ENCODE measurements at regions of chr3 and their contacts with region 1.

Region 1: GRCh38 chr3:194103983-194104751 is 31.8 kb upstream of the HES1 start:
- DNase-seq: peak; percentile 94
- ATAC-seq: peak; percentile 88
- H3K4me3 ChIP-seq: peak overlapping the region; percentile 10 to 63 (median 42)
- H3K4me3 Mint-ChIP-seq: peak overlapping the region; percentile 81
- H3K27ac ChIP-seq: peak overlapping the region; percentile 93 to 97
- H3K27ac Mint-ChIP-seq: peak overlapping the region; percentile 81
- H3K4me1 ChIP-seq: peaks cover 85 to 93% of the 10 kb centered on the region in 2 donors
- H3K4me1 Mint-ChIP-seq: peaks cover 88% of the 10 kb centered on the region
- H3K27me3 ChIP-seq: no peaks in the 10 kb centered on the region
- H3K27me3 Mint-ChIP-seq: no peaks in the 10 kb centered on the region
- CTCF ChIP-seq: no peak

Region 2: DNA sequence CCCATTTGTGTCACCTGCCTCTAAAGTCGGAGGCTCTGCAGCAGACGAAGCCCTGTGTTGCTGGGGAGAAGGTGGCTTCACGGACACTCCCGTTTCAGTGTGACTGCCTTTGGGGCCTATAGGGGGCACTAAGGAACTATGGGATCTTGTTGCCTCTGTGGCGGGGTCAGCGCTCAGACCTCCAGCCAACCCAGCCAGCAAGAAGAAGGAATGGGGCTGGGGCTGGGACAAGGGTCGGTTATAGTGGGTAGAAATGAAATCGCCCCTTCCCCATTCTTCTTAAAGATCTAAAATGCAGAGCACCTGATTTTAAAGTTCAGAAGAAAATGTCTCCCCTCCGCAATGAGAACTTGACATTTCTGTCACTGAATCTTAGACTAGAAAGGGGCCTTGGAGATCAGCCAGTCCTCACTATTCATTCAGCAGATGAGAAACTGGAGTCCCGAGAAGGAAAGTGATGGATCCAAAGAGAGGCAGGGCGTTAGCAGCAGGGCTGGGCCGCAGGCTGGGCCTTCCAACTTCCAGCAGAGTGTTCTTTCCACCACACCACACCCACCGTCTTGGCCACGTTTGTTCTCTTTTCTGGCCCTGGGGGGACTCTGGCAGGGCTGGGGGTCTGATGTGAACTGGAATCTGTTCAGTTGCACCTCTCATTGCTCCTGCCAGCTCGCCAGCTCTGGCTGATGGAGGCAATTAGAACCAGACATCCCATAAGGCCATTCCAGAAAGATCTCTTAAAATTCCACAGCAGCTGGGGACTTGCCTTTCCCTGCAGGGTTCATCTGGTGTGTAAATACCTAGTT is 315.8 kb before region 1 on chr3:
- CTCF ChIA-PET with region 1: interaction called, 4 read pairs
- POLR2A ChIA-PET with region 1: no interaction called
- intact Hi-C with region 1: loop called (anchors 1 kb)
- DNase-seq: peak; percentile 79
- ATAC-seq: peak; percentile 88
- H3K4me3 ChIP-seq: no peak overlapping the region
- H3K4me3 Mint-ChIP-seq: no peak overlapping the region
- H3K27ac ChIP-seq: no peak overlapping the region
- H3K27ac Mint-ChIP-seq: peak overlapping the region; percentile 57
- H3K4me1 ChIP-seq: peaks cover 12 to 17% of the 10 kb centered on the region in 2 donors
- H3K4me1 Mint-ChIP-seq: peaks cover 14% of the 10 kb centered on the region
- H3K27me3 ChIP-seq: peaks cover 0 to 44% (median 5%) of the 10 kb centered on the region in 4 experiments
- H3K27me3 Mint-ChIP-seq: peaks cover 54% of the 10 kb centered on the region
- CTCF ChIP-seq: peak; percentile 82

Region 3: GRCh38 chr3:194003125-194004057 is 100.8 kb before region 1 on chr3:
- CTCF ChIA-PET with region 1: interaction called, 3 read pairs
- POLR2A ChIA-PET with region 1: interaction called, 3 read pairs
- intact Hi-C with region 1: loop called (anchors 1 kb)
- DNase-seq: peak; percentile 69
- ATAC-seq: peak; percentile 93
- H3K4me3 ChIP-seq: peak overlapping the region in 4 of 5 experiments; percentile 31 to 76 (median 56)
- H3K4me3 Mint-ChIP-seq: peak overlapping the region; percentile 85
- H3K27ac ChIP-seq: peak overlapping the region in 1 of 2 donors; percentile 22
- H3K27ac Mint-ChIP-seq: peak overlapping the region; percentile 61
- H3K4me1 ChIP-seq: peaks cover 32 to 38% of the 10 kb centered on the region in 2 donors
- H3K4me1 Mint-ChIP-seq: peaks cover 33% of the 10 kb centered on the region
- H3K27me3 ChIP-seq: peaks cover 0 to 18% (median 0%) of the 10 kb centered on the region in 4 experiments
- H3K27me3 Mint-ChIP-seq: peaks cover 13% of the 10 kb centered on the region
- CTCF ChIP-seq: no peak

Region 4: DNA sequence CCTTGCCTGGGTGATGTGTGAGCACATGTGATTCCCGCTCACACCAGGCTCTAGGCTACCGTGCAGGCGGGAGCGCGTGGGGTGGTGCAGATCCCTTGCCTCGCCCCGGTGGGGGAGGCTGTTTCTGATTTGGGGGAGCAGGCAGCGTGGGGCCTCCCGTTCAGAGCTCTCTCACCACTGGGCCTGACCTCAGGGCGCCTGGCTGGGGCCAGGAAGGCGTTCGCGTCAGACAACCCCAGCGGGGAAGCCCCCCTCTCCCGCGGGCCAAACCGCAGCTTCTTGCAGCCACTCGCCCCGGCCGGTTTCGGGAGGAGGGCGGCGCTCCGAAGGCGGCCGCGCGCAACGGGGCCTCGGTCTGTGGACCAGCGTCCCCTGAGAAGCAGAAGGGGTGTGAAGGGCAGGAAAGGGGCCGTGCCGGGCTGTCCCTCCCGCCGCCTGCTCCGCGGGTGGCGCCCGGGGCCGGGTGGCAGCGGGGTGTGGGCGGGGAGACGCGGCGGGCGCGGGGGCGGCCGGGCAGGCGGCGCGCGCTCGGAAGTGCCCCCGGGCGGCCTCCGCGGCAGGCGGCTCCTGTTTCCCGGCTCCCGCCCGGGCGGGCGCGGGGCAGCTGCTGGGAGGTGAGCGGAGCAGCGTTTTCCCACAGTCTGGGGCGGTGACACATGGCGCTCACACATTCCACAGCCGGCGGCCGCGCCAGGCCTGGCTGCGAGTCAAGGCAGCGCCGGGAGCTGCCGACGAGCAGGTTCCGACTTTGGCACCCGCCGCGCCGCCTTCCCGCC is 33.3 kb before region 1 on chr3:
- CTCF ChIA-PET with region 1: interaction called, 8 read pairs
- POLR2A ChIA-PET with region 1: interaction called, 17 read pairs
- intact Hi-C with region 1: loop called (anchors 1 kb)
- DNase-seq: peak; percentile 96
- ATAC-seq: peak; percentile 94
- H3K4me3 ChIP-seq: peak overlapping the region; percentile 30 to 64 (median 52)
- H3K4me3 Mint-ChIP-seq: peak overlapping the region; percentile 85
- H3K27ac ChIP-seq: peak overlapping the region in 1 of 2 donors; percentile 59
- H3K27ac Mint-ChIP-seq: peak overlapping the region; percentile 87
- H3K4me1 ChIP-seq: peaks cover 15 to 22% of the 10 kb centered on the region in 2 donors
- H3K4me1 Mint-ChIP-seq: peaks cover 34% of the 10 kb centered on the region
- H3K27me3 ChIP-seq: no peaks in the 10 kb centered on the region
- H3K27me3 Mint-ChIP-seq: no peaks in the 10 kb centered on the region
- CTCF ChIP-seq: no peak

Region 5: GRCh38 chr3:194306109-194306686 is 202.0 kb after region 1 on chr3:
- CTCF ChIA-PET with region 1: interaction called, 4 read pairs
- POLR2A ChIA-PET with region 1: interaction called, 3 read pairs
- intact Hi-C with region 1: loop called (anchors 1 kb)
- DNase-seq: peak; percentile 89
- ATAC-seq: peak; percentile 63
- H3K4me3 ChIP-seq: peak overlapping the region in 3 of 5 experiments; percentile 7 to 57 (median 27)
- H3K4me3 Mint-ChIP-seq: peak overlapping the region; percentile 71
- H3K27ac ChIP-seq: peak overlapping the region; percentile 95 to 98
- H3K27ac Mint-ChIP-seq: peak overlapping the region; percentile 91
- H3K4me1 ChIP-seq: peaks cover 50 to 61% of the 10 kb centered on the region in 2 donors
- H3K4me1 Mint-ChIP-seq: peaks cover 51% of the 10 kb centered on the region
- H3K27me3 ChIP-seq: peaks cover 0 to 5% (median 2%) of the 10 kb centered on the region in 4 experiments
- H3K27me3 Mint-ChIP-seq: peaks cover 5% of the 10 kb centered on the region
- CTCF ChIP-seq: no peak

Measured in B cell (primary cell).